ENCODE measurements at regions of chr3 and their contacts with region 1.

Region 1: DNA sequence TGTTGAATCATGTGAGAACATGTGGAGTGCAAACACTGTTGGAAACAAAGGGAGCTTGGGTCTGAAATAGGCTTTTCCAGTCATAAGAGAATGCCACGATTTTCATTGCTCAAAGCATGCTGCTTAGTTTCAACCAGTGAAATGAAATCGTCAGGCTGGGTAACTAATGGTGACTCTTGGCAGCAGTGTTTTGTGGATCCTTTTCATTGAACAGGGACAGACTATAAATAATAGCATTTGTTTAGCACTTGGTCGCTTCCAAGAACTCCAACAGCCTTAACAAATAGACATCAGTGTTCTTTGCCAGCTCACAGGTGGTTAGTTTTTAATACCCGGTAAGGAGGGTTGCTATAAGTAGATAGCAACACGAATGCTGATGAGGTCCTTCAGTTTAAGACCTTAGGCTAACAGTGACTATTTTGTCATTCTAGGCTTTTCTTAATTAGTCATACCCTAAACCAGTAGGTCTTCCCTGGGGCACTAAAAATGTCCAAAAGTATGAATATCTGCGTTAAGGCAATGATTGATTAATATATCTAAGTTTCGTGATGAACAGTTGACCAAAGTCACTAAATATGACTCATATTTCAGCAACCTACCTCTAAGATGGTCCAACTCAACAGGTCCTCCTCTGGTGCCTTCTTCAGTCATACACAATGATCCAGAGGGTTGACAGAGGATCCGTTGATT is 15.8 kb downstream of the TP63 start:
- DNase-seq: no peak
- ATAC-seq: peak; percentile 67 to 92 (median 88)
- H3K4me3 ChIP-seq: peak overlapping the region; percentile 26
- H3K27ac ChIP-seq: peak overlapping the region; percentile 67
- H3K4me1 ChIP-seq: peaks cover 46% of the 10 kb centered on the region
- H3K27me3 ChIP-seq: no peaks in the 10 kb centered on the region
- CTCF ChIP-seq: no peak

Region 2: GRCh38 chr3:189410522-189410921 is 236.5 kb before region 1 on chr3:
- intact Hi-C with region 1: no loop called
- DNase-seq: no peak
- ATAC-seq: no peak
- H3K4me3 ChIP-seq: no peak overlapping the region
- H3K27ac ChIP-seq: no peak overlapping the region
- H3K4me1 ChIP-seq: peaks cover 10% of the 10 kb centered on the region
- H3K27me3 ChIP-seq: no peaks in the 10 kb centered on the region
- CTCF ChIP-seq: no peak

Region 3: GRCh38 chr3:189841473-189842210 is 194.6 kb after region 1 on chr3:
- intact Hi-C with region 1: loop called in 1 of 2 experiments (anchors 5 kb)
- DNase-seq: no peak
- ATAC-seq: no peak
- H3K4me3 ChIP-seq: no peak overlapping the region
- H3K27ac ChIP-seq: peak overlapping the region; percentile 76
- H3K4me1 ChIP-seq: peaks cover 39% of the 10 kb centered on the region
- H3K27me3 ChIP-seq: no peaks in the 10 kb centered on the region
- CTCF ChIP-seq: no peak